Activated B cell treated with CpG ODN at 0.5 μM for 24 hours (primary cell): ENCODE measurements at regions of chr19 and their contacts with region 1.

Region 1: DNA sequence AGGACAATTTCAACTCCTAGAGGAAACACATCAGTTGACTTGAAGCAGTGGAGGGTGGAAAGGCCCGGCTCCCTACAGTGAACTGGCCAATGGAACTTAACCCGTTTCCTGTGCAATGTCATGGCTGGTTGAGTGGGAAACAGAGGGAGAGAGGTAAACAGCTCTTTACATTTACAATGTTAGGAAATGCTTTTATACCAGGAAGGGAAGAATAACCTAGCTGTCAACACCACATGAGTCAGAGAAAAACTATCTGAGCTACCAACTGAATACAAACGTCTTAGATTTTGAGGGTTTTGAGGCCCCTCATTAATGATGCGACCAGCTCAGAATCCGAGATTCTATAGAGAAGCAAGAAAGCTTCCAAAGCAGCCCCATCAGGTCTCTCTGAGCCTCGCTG is 36.7 kb downstream of the CARD8 start:
- DNase-seq: no peak
- ATAC-seq: no peak
- H3K4me3 Mint-ChIP-seq: no peak overlapping the region
- H3K27ac Mint-ChIP-seq: no peak overlapping the region
- H3K4me1 Mint-ChIP-seq: no peaks in the 10 kb centered on the region
- H3K27me3 Mint-ChIP-seq: no peaks in the 10 kb centered on the region
- CTCF ChIP-seq: no peak

Region 2: DNA sequence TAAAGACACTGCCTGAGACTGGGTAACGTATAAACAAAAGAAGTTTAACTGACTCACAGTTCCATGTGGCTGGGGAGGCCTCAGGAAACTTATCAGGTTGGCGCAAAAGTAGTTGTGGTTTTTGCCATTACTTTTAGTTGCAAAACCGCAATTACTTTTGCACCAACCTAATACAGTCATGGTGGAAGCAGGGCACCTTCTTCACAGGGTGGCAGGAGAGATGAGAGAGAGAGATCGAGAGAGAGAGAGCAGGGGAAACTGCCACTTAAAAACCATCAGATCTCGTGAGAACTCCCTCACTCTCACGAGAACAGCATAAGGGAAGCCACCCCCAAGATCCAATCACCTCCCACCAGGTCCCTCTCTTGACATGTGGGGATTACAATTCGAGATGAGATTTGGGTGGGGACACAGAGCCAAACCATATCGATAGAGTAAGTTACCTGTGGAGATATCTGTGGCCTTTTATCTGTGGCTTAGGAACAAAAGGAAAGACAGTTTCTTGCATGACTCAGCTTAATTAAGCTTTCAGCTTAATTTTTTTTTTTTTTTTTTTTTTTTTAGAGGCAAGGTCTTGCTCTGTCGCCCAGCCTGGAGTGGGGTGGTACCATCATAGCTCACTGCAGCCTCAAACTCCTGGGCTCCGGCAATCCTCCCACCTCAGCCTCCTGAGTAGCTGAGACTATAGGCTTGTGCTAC is 167.5 kb before region 1 on chr19:
- CTCF ChIA-PET with region 1: no interaction called
- POLR2A ChIA-PET with region 1: no interaction called
- intact Hi-C with region 1: no loop called
- DNase-seq: no peak
- ATAC-seq: no peak
- H3K4me3 Mint-ChIP-seq: no peak overlapping the region
- H3K27ac Mint-ChIP-seq: no peak overlapping the region
- H3K4me1 Mint-ChIP-seq: no peaks in the 10 kb centered on the region
- H3K27me3 Mint-ChIP-seq: no peaks in the 10 kb centered on the region
- CTCF ChIP-seq: no peak

Region 3: GRCh38 chr19:48239580-48240141 is 20.7 kb after region 1 on chr19:
- CTCF ChIA-PET with region 1: no interaction called
- POLR2A ChIA-PET with region 1: interaction called, 14 read pairs
- intact Hi-C with region 1: no loop called
- DNase-seq: no peak
- ATAC-seq: no peak
- H3K4me3 Mint-ChIP-seq: no peak overlapping the region
- H3K27ac Mint-ChIP-seq: no peak overlapping the region
- H3K4me1 Mint-ChIP-seq: peaks cover 25% of the 10 kb centered on the region
- H3K27me3 Mint-ChIP-seq: no peaks in the 10 kb centered on the region
- CTCF ChIP-seq: no peak

Region 4: GRCh38 chr19:48433337-48433736 is 214.3 kb after region 1 on chr19:
- CTCF ChIA-PET with region 1: no interaction called
- POLR2A ChIA-PET with region 1: interaction called, 14 read pairs
- intact Hi-C with region 1: no loop called
- DNase-seq: no peak
- ATAC-seq: no peak
- H3K4me3 Mint-ChIP-seq: no peak overlapping the region
- H3K27ac Mint-ChIP-seq: no peak overlapping the region
- H3K4me1 Mint-ChIP-seq: no peaks in the 10 kb centered on the region
- H3K27me3 Mint-ChIP-seq: peaks cover 20% of the 10 kb centered on the region
- CTCF ChIP-seq: no peak

Region 5: DNA sequence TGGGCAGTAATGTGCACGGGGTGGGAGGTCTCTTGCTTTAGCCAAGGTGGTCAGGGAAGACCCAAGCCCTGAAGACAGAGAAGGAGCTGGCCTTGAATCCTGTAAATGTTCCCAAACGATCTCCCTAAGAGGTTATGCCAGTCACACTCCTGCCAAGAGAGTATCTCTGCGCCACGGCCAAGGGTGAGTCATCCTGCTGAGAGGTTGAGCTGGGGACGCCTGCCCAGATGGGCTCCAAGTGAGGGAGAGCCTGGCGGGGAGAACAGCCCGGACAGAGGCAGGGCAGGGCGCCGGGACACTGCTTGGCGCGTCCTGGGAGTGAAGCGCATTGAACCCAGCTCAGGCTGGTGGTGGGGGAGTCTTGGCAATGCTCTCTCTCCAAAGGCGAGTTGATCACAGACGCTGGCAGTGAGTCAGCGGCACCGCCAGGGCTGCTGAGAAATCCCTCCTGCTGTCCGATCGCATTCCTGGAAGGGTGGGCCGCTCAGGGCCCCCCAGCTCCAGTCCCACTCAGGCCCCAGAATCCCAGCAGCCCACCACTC is 349.4 kb after region 1 on chr19:
- CTCF ChIA-PET with region 1: no interaction called
- POLR2A ChIA-PET with region 1: no interaction called
- intact Hi-C with region 1: no loop called
- DNase-seq: no peak
- ATAC-seq: no peak
- H3K4me3 Mint-ChIP-seq: no peak overlapping the region
- H3K27ac Mint-ChIP-seq: no peak overlapping the region
- H3K4me1 Mint-ChIP-seq: peaks cover 2% of the 10 kb centered on the region
- H3K27me3 Mint-ChIP-seq: peaks cover 9% of the 10 kb centered on the region
- CTCF ChIP-seq: no peak